Activated B cell treated with CpG ODN at 0.5 μM for 24 hours (primary cell): ENCODE measurements at regions of chr20 and their contacts with region 1.

Region 1: DNA sequence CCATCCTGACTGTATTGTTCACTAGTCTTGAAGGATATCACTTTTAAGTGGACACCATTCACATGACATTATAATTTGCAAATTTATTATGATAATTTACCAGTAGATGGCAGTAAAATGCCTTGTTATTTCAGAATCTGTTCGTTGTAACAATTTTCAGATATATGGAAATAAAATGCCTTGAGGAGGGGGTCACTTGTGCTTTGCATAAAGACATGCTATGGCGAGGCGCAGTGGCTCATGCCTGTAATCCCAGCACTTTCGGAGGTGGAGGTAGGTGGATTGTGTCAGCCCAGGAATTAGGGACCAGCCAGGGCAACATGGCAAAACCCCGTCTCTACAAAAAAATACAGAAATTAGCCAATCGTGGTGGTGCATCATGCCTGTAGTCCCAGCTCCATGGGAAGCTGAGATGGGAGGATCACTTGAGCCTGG is 9.0 kb upstream of the NCOA6 start:
- DNase-seq: no peak
- ATAC-seq: no peak
- H3K4me3 Mint-ChIP-seq: no peak overlapping the region
- H3K27ac Mint-ChIP-seq: no peak overlapping the region
- H3K4me1 Mint-ChIP-seq: peaks cover 2% of the 10 kb centered on the region
- H3K27me3 Mint-ChIP-seq: peaks cover 10% of the 10 kb centered on the region
- CTCF ChIP-seq: no peak

Region 2: DNA sequence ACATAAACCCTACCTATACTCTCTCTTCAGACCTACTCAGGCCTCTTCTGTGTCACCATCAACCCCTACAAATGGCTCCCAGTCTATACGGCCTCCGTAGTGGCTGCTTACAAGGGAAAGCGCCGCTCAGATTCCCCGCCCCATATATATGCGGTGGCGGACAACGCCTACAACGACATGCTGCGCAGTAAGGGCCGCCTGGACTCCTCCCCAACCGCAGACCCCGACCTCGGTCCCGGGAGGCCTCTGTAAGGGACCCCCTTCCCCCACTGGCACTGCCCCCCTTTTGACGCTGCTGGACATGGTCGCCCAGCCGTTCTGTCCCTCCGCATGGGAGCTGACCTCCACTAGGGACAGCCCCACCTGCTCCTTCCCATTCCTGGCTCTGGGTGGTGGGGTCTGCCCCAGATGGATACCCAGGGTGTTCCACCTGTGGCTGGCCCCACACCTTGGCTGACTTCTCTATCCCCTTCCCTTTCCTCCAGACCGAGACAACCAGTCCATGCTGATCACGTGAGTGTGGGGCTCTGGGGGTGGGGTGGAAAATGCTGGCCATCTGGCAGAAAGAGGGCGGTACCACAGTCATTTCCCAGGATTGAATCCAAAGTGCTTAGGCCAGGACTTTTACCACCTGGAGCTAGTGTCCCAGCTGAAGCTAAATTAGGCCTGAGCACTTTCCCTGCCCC is 146.2 kb after region 1 on chr20:
- CTCF ChIA-PET with region 1: no interaction called
- POLR2A ChIA-PET with region 1: no interaction called
- intact Hi-C with region 1: no loop called
- DNase-seq: no peak
- ATAC-seq: no peak
- H3K4me3 Mint-ChIP-seq: no peak overlapping the region
- H3K27ac Mint-ChIP-seq: no peak overlapping the region
- H3K4me1 Mint-ChIP-seq: no peaks in the 10 kb centered on the region
- H3K27me3 Mint-ChIP-seq: peaks cover 34% of the 10 kb centered on the region
- CTCF ChIP-seq: no peak

Region 3: DNA sequence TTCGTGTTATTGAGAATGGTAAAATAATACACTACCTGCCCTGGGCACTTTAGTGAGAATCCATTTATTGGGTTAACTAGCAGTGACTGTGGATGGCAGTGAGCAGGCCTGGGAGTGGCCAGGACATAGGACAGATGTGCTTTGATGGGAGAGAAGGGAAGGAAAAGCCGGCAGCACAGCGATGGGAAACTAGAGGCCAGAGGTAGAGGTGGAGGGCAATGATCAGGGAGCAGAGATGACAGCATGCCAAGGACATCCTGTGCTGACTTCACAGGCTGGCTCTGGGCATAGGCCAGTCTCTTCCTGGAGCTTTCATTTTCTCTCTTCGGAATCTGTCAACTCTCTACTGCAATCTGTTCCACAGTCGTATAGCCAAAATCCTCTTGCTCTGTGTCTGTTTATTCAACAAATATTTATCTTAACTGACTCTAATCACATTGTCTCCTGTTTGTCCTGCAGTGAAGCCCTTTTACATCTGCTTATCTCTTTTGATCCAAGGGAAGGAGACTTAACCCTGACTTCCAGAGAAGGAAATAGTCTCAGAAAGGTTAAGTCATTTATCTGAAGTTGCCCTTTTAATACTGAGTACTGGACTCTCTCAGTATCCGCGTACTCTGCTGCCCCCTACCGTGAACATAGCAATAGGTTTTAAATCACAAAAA is 373.6 kb after region 1 on chr20:
- CTCF ChIA-PET with region 1: interaction called, 6 read pairs
- POLR2A ChIA-PET with region 1: no interaction called
- intact Hi-C with region 1: loop called (anchors 1 kb)
- DNase-seq: peak; percentile 42
- ATAC-seq: peak; percentile 85
- H3K4me3 Mint-ChIP-seq: no peak overlapping the region
- H3K27ac Mint-ChIP-seq: no peak overlapping the region
- H3K4me1 Mint-ChIP-seq: no peaks in the 10 kb centered on the region
- H3K27me3 Mint-ChIP-seq: no peaks in the 10 kb centered on the region
- CTCF ChIP-seq: no peak

Region 4: DNA sequence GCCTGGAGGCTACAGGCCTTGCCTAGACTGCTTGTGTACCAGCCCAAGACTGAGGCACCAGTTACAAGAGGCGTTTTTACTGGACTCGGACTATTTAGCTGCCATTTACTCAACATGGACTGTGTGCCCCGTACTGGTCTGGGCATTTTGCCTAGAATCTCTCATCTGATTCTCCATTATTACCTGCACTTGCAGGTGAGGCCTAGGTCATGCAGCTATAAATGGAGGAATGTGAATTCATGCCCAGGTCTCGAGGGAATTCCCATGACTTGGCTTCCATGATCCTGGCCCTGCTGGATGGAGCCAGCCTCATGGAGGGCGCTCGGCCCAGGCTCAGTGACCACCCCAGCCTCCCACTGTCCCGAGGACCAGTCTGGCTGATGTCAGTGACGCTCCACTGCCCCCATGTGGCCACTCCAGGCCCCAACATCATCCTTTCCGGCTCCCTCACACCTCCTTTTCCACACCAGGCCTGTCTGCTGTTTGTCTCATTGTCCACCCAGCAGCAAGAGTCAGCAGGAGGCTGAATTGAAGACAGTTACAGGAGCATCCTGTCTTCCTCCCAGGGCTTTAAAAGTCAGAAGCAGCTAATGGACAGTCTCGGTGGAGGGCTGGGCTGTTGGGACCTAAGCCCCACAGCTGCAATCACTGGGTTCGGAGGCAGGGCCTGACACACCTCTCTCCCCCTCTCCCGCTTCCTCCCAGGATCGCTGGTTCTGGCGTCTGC is 434.7 kb after region 1 on chr20:
- CTCF ChIA-PET with region 1: no interaction called
- POLR2A ChIA-PET with region 1: no interaction called
- intact Hi-C with region 1: loop called (anchors 1 kb)
- DNase-seq: peak; percentile 32
- ATAC-seq: peak; percentile 86
- H3K4me3 Mint-ChIP-seq: no peak overlapping the region
- H3K27ac Mint-ChIP-seq: no peak overlapping the region
- H3K4me1 Mint-ChIP-seq: no peaks in the 10 kb centered on the region
- H3K27me3 Mint-ChIP-seq: no peaks in the 10 kb centered on the region
- CTCF ChIP-seq: no peak